H1 (cell line): ENCODE measurements at regions of chr1 and their contacts with region 1.

Region 1: DNA sequence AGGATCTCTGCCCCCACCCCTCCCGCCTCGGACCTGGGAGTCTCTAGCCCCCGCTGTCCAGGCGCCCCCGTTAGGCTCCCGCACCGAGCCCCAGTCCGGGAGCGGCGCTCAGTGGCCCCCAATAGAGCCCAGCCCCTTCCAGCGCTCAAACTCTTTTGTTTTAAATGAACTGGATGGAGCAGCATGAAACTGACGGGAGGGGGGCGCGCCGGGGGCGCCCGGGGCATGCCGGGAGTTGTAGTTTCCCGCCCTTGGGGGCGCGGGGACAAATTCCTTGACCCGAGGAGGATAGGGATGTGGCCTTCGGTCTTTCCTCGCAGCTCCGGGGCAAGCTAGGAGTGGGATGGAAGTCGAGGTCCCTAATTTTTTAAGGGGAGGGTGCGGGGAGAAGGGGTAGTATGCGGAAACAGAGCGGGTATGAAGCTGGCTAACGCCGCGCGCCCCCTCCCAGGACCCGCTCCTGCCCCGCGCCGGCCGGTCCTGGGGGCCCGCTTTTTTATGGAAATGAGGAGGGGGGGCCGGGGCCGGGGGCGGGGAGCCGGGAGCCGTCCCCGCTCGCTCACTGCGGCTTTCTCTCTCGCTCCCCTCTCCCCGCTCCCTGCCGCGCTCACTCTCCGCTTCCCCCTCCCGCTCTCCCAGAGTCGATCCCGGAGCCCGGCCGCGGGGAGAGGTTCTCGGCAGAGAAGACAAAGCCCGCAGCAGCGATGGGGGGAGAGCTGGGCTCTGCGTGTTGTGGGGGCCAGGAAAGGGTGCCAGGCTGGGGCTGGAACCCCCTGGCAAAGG is at the start of gene MEX3A:
- DNase-seq: peak; percentile 92 to 98
- H3K4me3 ChIP-seq: peak within 1 kb of the TSS; percentile 86 to 98 (median 94)
- H3K27ac ChIP-seq: peak within 1 kb of the TSS; percentile 86
- H3K4me1 ChIP-seq: peaks cover 10 to 23% (median 13%) of the 10 kb centered on the region in 4 experiments
- H3K27me3 ChIP-seq: no peaks in the 10 kb centered on the region
- CTCF ChIP-seq: no peak
- EP300 ChIP-seq: peak in 1 of 2 experiments; percentile 60; a peak in 1 of 3 replicates
- POLR2A ChIP-seq: peak; percentile 48 to 54; a peak in 2 of 3 replicates
- RAD21 ChIP-seq: no peak
- total RNA-seq, gene MEX3A: 52.4 and 54.7 TPM in 2 replicates

Region 2: DNA sequence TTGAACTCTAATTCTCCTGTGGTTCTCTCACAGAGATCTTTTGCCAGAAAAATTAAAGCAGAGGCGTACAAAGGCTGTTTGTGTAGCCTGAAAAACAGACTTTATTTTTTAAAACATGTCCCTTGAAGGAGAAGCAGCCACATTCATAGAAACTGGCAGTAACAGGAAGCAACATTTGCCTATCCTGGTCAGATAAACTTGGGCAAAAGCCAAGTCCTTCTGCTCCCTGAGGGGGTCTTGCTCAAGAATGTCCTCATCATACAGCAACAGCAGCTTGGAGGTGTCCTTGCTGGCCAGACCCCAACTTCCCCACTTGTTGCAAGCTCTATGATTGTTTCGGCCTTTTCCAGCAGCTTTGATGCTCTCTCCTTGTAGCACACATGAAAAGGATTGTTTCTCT is 436.2 kb before region 1 on chr1:
- CTCF ChIA-PET with region 1: no interaction called
- POLR2A ChIA-PET with region 1: no interaction called
- DNase-seq: no peak
- H3K4me3 ChIP-seq: no peak overlapping the region
- H3K27ac ChIP-seq: no peak overlapping the region
- H3K4me1 ChIP-seq: no peaks in the 10 kb centered on the region
- H3K27me3 ChIP-seq: no peaks in the 10 kb centered on the region
- CTCF ChIP-seq: no peak
- EP300 ChIP-seq: no peak
- POLR2A ChIP-seq: no peak
- RAD21 ChIP-seq: no peak

Region 3: DNA sequence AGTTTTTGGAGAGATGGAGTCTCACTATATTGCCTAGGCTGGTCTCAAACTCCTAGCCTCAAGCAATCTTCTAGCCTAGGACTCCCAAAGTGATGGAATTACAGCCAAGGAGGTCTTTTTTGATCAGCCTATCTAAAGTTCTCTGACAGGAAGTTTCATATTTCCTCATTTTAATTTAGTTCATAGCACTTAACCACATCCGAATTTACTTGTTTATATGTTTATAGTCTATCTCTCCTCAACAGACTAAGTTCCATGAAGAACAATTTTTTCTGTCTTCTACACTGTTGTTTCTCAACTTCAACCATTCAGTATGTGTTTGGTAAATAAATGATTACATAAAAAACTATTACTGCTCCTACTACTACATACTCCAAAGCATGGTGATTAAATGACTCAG is 273.4 kb before region 1 on chr1:
- CTCF ChIA-PET with region 1: no interaction called
- POLR2A ChIA-PET with region 1: no interaction called
- DNase-seq: no peak
- H3K4me3 ChIP-seq: no peak overlapping the region
- H3K27ac ChIP-seq: no peak overlapping the region
- H3K4me1 ChIP-seq: no peaks in the 10 kb centered on the region
- H3K27me3 ChIP-seq: no peaks in the 10 kb centered on the region
- CTCF ChIP-seq: no peak
- EP300 ChIP-seq: no peak
- POLR2A ChIP-seq: no peak
- RAD21 ChIP-seq: no peak

Region 4: GRCh38 chr1:155900161-155900560 is 182.3 kb before region 1 on chr1:
- CTCF ChIA-PET with region 1: no interaction called
- POLR2A ChIA-PET with region 1: no interaction called
- DNase-seq: no peak
- H3K4me3 ChIP-seq: no peak overlapping the region
- H3K27ac ChIP-seq: no peak overlapping the region
- H3K4me1 ChIP-seq: no peaks in the 10 kb centered on the region
- H3K27me3 ChIP-seq: no peaks in the 10 kb centered on the region
- CTCF ChIP-seq: no peak
- EP300 ChIP-seq: no peak
- POLR2A ChIP-seq: no peak
- RAD21 ChIP-seq: no peak

Region 5: GRCh38 chr1:156070548-156070947 is 12.0 kb before region 1 on chr1:
- CTCF ChIA-PET with region 1: interaction called, 17 read pairs
- POLR2A ChIA-PET with region 1: interaction called, 39 read pairs
- DNase-seq: no peak
- H3K4me3 ChIP-seq: no peak overlapping the region
- H3K27ac ChIP-seq: no peak overlapping the region
- H3K4me1 ChIP-seq: peaks cover 12 to 33% (median 24%) of the 10 kb centered on the region in 4 experiments; a peak in 6 of 7 replicates
- H3K27me3 ChIP-seq: no peaks in the 10 kb centered on the region
- CTCF ChIP-seq: no peak
- EP300 ChIP-seq: no peak
- POLR2A ChIP-seq: no peak
- RAD21 ChIP-seq: no peak

Region 6: GRCh38 chr1:156096640-156097391 is 14.3 kb after region 1 on chr1:
- CTCF ChIA-PET with region 1: interaction called, 171 read pairs
- POLR2A ChIA-PET with region 1: interaction called, 11 read pairs
- DNase-seq: peak in 1 of 2 experiments; percentile 95
- H3K4me3 ChIP-seq: no peak overlapping the region
- H3K27ac ChIP-seq: no peak overlapping the region
- H3K4me1 ChIP-seq: peaks cover 0 to 10% (median 3%) of the 10 kb centered on the region in 4 experiments; a peak in 3 of 7 replicates
- H3K27me3 ChIP-seq: no peaks in the 10 kb centered on the region; a peak in 1 of 7 replicates
- CTCF ChIP-seq: peak; percentile 94 to 100 (median 97)
- EP300 ChIP-seq: no peak
- POLR2A ChIP-seq: no peak
- RAD21 ChIP-seq: peak; percentile 93

Region 7: DNA sequence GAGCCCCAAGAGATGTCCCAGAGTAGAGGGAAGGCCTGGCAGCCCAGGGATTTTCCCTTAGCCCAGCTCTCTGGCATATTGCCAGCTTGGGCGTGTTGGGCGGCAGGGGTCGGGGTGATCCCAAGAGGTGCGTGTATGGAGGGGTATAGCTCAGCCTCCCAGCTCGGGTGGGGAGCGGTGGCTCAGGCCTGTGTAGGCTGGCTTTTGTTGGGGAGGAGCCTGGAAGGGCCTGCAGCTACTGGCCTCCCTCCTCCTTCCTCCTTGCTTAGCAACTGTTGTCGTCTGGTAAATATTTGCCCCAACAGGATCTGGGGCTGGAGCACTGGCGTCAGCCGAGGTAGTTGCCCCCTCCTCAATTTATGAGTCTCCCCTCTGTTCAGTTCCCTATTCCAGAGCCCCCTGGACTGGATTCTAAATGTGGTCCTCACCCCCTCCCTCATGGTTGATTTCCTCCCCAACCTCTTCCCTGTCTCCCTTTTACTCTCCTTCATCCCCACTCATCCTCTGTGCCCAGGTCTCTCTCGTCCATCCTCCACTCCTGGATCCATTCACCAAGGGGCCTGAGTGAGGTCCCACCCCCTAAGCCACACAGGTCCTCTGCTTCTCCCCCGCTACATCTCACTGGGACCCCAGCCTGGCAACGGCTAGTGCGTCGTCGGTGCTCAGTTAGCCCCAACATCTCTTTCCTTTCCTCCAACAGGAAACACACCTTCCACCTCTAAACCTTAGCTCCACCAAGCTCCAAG is 21.7 kb after region 1 on chr1:
- CTCF ChIA-PET with region 1: interaction called, 171 read pairs
- POLR2A ChIA-PET with region 1: interaction called, 22 read pairs
- DNase-seq: no peak
- H3K4me3 ChIP-seq: no peak overlapping the region; a peak in 1 of 8 replicates
- H3K27ac ChIP-seq: peak overlapping the region; percentile 76
- H3K4me1 ChIP-seq: peaks cover 10 to 37% (median 32%) of the 10 kb centered on the region in 4 experiments
- H3K27me3 ChIP-seq: no peaks in the 10 kb centered on the region; a peak in 1 of 7 replicates
- CTCF ChIP-seq: no peak
- EP300 ChIP-seq: no peak
- POLR2A ChIP-seq: no peak
- RAD21 ChIP-seq: no peak

Region 8: GRCh38 chr1:156160743-156161171 is 78.3 kb after region 1 on chr1:
- CTCF ChIA-PET with region 1: no interaction called
- POLR2A ChIA-PET with region 1: no interaction called
- DNase-seq: peak in 1 of 2 experiments; percentile 81
- H3K4me3 ChIP-seq: peak overlapping the region; percentile 32 to 68 (median 34); a peak in 7 of 8 replicates
- H3K27ac ChIP-seq: no peak overlapping the region
- H3K4me1 ChIP-seq: peaks cover 3 to 14% (median 10%) of the 10 kb centered on the region in 4 experiments; a peak in 6 of 7 replicates
- H3K27me3 ChIP-seq: no peaks in the 10 kb centered on the region
- CTCF ChIP-seq: no peak
- EP300 ChIP-seq: no peak
- POLR2A ChIP-seq: peak in 1 of 2 experiments; percentile 25; a peak in 1 of 3 replicates
- RAD21 ChIP-seq: no peak